HCT116 (cell line): ENCODE measurements at regions of chr7 and their contacts with region 1.

Region 1: DNA sequence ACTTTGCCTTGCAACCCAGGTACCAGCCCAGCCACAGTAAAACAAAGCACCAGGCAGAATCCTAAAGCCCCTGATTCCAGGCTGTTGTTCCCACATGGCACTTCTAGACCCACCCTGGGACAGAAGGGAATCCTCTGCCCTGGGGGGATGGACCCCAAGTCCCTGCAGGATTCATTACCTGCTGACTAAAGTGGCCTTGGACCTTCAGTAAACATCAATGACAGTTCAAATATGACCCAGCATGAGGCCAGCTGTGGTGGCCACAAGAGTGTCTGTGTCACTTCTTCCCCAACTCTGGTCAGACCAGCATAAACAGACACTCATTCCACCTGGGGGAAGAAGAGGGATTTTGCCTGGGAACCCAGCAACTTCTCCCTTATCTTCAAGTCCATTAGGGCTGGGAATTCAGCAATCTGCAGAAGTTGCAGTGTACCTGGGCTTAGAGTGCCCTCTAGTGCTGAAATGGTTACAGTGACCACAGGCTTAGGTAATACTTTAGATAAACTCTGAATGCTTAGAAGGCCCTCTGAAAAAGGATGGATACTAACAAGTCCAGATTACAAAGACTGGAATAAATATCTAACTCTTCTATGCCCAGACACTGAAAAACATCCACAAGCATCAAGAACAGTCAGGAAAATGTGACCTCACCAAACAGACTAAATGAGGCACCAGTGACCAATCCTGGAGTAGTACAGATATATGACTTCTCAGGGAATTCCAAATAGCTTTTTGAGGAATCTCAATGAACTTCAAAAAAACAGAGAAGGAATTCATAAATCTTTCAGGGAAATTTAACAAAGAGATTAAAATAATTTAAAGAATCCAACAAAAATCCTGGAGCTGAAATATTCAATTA is 108.5 kb upstream of the TMEM168 start:
- DNase-seq: peak; percentile 51
- ATAC-seq: peak; percentile 95
- H3K4me3 ChIP-seq: no peak overlapping the region
- H3K27ac ChIP-seq: no peak overlapping the region
- H3K4me1 ChIP-seq: no peaks in the 10 kb centered on the region
- H3K27me3 ChIP-seq: no peaks in the 10 kb centered on the region
- CTCF ChIP-seq: peak; percentile 62 to 89 (median 81); a peak in 5 of 6 replicates
- POLR2A ChIP-seq: no peak
- RAD21 ChIP-seq: peak; percentile 86

Region 2: DNA sequence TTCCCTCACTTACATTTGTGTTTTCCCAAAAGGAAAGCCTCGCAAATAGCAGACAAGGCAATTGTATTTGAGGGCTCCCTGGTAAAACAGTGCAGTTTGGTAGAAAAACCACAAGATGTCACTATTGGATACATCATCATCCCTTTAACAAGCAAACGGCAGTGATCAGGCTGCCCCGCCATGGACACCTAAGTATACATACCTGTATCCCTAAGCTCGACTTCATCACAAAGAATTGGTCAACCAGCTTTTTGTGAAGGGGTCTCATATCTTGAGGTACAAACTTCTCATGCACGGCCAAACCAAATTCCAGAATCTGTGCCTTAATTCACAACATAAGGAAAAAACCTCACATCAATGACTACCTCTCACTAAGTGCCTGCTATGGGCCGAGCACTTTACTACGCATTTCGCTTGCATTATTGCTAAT is 1156.8 kb before region 1 on chr7:
- CTCF ChIA-PET with region 1: no interaction called
- POLR2A ChIA-PET with region 1: no interaction called
- RAD21 ChIA-PET with region 1: no interaction called
- intact Hi-C with region 1: loop called (anchors 5 kb)
- DNase-seq: peak; percentile 75
- ATAC-seq: peak; percentile 96
- H3K4me3 ChIP-seq: no peak overlapping the region
- H3K27ac ChIP-seq: no peak overlapping the region
- H3K4me1 ChIP-seq: no peaks in the 10 kb centered on the region
- H3K27me3 ChIP-seq: no peaks in the 10 kb centered on the region
- CTCF ChIP-seq: peak; percentile 60 to 86 (median 81)
- POLR2A ChIP-seq: no peak
- RAD21 ChIP-seq: peak; percentile 85

Region 3: DNA sequence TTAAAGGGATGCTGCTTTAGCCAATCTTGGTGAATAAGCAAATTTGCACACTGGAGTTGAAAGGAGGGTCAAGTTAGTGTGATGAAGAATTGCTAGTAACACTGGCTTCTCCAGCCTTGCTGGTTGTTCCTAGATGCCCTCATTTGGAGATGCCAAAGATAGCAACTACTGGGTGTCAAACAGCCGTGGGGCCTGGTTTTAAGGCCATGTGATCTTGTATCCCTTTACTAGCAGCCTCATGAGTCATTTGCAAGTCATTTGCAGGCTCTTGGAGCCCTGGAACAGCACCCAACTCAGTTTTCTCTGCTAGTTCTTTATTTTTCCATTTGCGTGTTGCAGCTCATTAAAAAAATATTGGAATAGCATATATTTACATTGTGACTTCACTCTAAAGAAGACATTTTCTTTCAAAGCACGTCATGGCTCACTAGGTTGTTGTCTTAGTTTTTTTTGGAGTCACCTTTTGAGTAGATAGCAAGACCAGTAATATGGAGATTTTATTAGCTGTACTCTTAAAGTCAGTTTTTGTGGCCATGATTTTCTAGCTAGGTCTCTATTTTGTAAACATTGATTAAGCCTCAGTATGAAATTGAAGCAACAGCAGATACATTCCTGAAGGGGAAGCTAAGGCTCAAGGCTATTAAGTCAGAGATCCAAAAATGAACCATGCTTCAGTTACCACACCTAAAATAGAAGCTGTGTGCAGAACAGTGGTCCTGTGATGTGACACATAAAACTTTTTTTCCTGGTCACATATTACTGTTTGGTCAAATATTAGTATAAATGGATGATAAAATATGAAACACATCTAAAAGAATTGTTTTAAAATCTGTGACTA is 416.6 kb before region 1 on chr7:
- CTCF ChIA-PET with region 1: no interaction called
- POLR2A ChIA-PET with region 1: no interaction called
- RAD21 ChIA-PET with region 1: no interaction called
- intact Hi-C with region 1: loop called (anchors 1 kb)
- DNase-seq: peak; percentile 50
- ATAC-seq: peak; percentile 62
- H3K4me3 ChIP-seq: no peak overlapping the region
- H3K27ac ChIP-seq: no peak overlapping the region
- H3K4me1 ChIP-seq: peaks cover 29 to 41% of the 10 kb centered on the region in 2 experiments
- H3K27me3 ChIP-seq: no peaks in the 10 kb centered on the region
- CTCF ChIP-seq: no peak
- POLR2A ChIP-seq: no peak
- RAD21 ChIP-seq: no peak

Region 4: DNA sequence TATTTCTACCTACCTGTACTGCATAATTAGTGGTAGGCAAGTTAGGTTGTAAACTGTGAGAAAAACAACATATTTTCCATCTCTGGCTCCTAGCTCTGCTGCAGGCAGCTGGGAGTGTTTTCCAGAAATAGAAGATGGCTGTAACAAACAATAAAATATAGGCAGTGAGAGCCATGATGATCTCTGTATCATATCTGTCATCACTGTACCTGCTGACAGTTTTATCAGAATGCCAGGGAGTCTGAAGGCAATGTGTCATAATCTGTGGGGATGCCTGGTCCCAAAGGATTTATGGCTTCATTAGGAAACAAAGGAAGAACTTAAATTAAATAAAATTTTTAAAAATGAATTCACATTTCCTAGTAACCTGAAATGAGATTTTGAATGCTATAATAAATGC is 380.6 kb after region 1 on chr7:
- CTCF ChIA-PET with region 1: no interaction called
- POLR2A ChIA-PET with region 1: no interaction called
- RAD21 ChIA-PET with region 1: no interaction called
- intact Hi-C with region 1: no loop called
- DNase-seq: no peak
- ATAC-seq: no peak
- H3K4me3 ChIP-seq: no peak overlapping the region
- H3K27ac ChIP-seq: no peak overlapping the region
- H3K4me1 ChIP-seq: no peaks in the 10 kb centered on the region
- H3K27me3 ChIP-seq: no peaks in the 10 kb centered on the region
- CTCF ChIP-seq: no peak
- POLR2A ChIP-seq: no peak
- RAD21 ChIP-seq: no peak